OCI-LY7 (cell line): ENCODE measurements at regions of chr14 and their contacts with region 1.

Region 1: GRCh38 chr14:60204104-60204842 is 39.1 kb upstream of the DHRS7 start:
- DNase-seq: peak; percentile 94
- H3K4me3 ChIP-seq: peak overlapping the region; percentile 52
- H3K27ac ChIP-seq: peak overlapping the region; percentile 96
- H3K4me1 ChIP-seq: peaks cover 44% of the 10 kb centered on the region
- CTCF ChIP-seq: no peak

Region 2: DNA sequence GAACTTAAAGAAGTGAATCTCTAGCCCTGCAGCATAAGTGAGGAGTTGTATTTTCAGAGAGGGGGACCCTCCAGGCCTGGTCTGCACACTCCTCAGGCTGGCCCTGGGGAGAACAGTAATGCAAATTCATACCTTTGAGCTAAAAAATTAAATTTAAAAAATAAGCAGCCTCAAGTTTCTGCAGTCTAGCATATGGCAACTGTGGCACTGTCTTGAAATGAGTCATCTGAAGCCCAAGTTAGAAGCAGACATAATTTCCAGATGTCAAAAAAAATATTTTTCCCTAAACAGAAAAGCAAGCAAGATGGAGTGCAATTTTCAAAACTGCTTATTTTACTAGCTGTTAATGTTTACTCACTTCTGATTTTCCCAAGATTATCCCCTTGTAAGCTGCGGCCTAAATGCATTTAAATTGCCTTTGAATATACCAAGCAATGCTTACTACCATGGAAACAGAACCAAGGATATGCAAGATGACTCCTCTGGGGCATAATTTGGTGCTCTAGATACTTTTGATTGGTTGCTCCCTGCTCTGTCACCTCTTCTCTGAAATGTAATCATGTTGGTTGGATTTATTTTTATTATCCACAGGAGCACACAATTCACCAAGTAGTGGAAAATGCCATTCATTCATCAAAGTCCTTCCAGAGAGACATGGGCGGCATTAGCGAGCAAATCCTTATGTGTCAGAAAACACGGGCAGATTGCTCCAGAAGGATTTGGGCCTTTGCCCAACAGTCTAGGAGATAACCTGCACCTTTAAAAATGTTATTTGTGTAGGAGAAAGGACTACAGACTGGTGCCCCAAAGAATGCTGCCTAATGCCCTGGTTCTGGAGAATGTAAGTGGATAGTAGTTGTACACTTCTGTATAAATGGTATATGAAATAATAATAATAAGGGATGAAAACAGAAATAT is 14.1 kb before region 1 on chr14:
- CTCF ChIA-PET with region 1: no interaction called
- POLR2A ChIA-PET with region 1: interaction called, 18 read pairs
- intact Hi-C with region 1: no loop called
- DNase-seq: no peak
- H3K4me3 ChIP-seq: no peak overlapping the region
- H3K27ac ChIP-seq: no peak overlapping the region
- H3K4me1 ChIP-seq: peaks cover 25% of the 10 kb centered on the region
- CTCF ChIP-seq: no peak